B cell (primary cell): ENCODE measurements at regions of chr9 and their contacts with region 1.

Region 1: DNA sequence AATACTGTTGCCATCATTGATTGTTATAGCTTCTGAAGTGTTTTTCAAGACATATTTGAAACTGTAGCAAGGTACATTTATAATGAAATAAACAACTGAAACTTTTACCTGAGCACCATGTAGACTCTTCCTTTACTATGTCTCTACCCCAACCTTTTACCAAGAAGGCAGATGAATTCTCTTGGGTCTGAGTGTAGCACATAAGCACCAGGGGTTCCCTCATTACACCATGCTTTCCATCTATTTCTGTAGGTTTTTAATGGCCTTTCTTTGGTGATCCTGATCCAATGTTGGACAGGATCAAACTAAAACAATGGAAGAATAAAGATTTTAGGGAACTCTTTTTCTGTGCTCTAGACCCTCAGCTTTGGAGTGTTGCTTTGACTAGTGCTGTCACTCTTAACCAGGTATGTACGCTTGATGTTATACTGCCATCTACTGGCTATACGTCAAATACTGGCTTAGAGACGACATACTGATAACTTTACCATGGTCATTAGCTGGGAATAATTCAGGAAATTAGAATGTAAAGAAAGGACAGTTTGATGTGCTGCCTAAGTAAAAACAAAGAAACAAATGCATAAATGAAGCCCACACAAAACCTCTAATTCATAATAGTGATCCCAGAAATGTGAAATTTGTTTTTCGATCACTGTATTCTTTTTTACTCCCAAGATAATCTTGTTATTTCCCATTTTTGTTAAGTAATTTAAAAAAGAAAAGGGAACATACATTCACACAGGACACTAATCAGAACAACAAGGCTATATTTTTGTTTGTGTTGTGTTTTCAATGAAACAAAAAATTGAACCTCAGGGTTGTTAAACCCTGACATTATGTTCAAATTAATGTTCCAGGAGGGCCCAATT is 30.7 kb downstream of the IFNW1 start:
- DNase-seq: peak; percentile 74
- ATAC-seq: peak; percentile 47
- H3K4me3 ChIP-seq: no peak overlapping the region
- H3K4me3 Mint-ChIP-seq: no peak overlapping the region
- H3K27ac ChIP-seq: no peak overlapping the region
- H3K27ac Mint-ChIP-seq: no peak overlapping the region
- H3K4me1 ChIP-seq: no peaks in the 10 kb centered on the region
- H3K4me1 Mint-ChIP-seq: no peaks in the 10 kb centered on the region
- H3K27me3 ChIP-seq: no peaks in the 10 kb centered on the region
- H3K27me3 Mint-ChIP-seq: peaks cover 3% of the 10 kb centered on the region
- CTCF ChIP-seq: peak; percentile 93

Region 2: DNA sequence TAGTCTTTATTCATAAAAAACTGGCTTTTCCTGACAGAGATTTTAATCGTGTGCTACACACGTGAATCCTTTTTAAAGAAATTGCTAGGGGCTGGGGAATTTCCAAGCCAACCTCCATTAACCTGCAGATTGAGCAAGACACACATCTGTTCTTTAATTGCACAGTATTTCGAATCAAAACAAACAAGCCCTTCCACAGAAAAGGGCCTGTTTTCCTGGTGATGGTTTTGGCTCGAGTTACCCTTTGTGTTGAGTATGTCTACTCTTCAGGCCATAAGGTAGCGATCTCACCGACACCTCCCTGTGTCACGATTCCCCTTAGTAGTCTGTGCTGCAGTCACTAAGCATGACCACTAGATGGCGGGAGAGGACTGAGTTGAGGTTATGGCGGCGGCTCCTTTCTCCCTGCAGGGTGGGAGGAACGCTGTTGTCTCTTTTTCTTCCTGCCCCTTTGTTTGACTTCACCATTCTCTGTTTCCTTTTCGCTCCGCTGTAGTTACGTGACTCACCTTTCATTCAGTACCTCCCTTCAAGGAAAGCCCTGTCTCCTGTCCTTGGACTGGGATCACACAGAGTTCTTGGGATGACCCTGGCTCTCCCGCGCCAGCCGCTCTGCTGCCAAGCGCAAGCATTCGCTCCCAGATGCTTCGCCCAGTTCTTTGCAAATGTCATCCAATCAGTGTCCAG is 1185.0 kb before region 1 on chr9:
- CTCF ChIA-PET with region 1: interaction called, 40 read pairs
- POLR2A ChIA-PET with region 1: no interaction called
- intact Hi-C with region 1: loop called (anchors 1 kb)
- DNase-seq: peak; percentile 81
- ATAC-seq: peak; percentile 97
- H3K4me3 ChIP-seq: peak overlapping the region in 3 of 5 experiments; percentile 2 to 21 (median 4)
- H3K4me3 Mint-ChIP-seq: peak overlapping the region; percentile 20
- H3K27ac ChIP-seq: no peak overlapping the region
- H3K27ac Mint-ChIP-seq: no peak overlapping the region
- H3K4me1 ChIP-seq: peaks cover 8 to 10% of the 10 kb centered on the region in 2 donors
- H3K4me1 Mint-ChIP-seq: peaks cover 9% of the 10 kb centered on the region
- H3K27me3 ChIP-seq: peaks cover 0 to 9% (median 7%) of the 10 kb centered on the region in 4 experiments
- H3K27me3 Mint-ChIP-seq: peaks cover 20% of the 10 kb centered on the region
- CTCF ChIP-seq: peak; percentile 96

Region 3: GRCh38 chr9:20552874-20553575 is 557.9 kb before region 1 on chr9:
- CTCF ChIA-PET with region 1: interaction called, 3 read pairs
- POLR2A ChIA-PET with region 1: no interaction called
- intact Hi-C with region 1: loop called (anchors 2 kb)
- DNase-seq: peak; percentile 1
- ATAC-seq: no peak
- H3K4me3 ChIP-seq: no peak overlapping the region
- H3K4me3 Mint-ChIP-seq: no peak overlapping the region
- H3K27ac ChIP-seq: no peak overlapping the region
- H3K27ac Mint-ChIP-seq: no peak overlapping the region
- H3K4me1 ChIP-seq: peaks cover 0 to 7% of the 10 kb centered on the region in 2 donors
- H3K4me1 Mint-ChIP-seq: peaks cover 10% of the 10 kb centered on the region
- H3K27me3 ChIP-seq: no peaks in the 10 kb centered on the region
- H3K27me3 Mint-ChIP-seq: no peaks in the 10 kb centered on the region
- CTCF ChIP-seq: no peak

Region 4: DNA sequence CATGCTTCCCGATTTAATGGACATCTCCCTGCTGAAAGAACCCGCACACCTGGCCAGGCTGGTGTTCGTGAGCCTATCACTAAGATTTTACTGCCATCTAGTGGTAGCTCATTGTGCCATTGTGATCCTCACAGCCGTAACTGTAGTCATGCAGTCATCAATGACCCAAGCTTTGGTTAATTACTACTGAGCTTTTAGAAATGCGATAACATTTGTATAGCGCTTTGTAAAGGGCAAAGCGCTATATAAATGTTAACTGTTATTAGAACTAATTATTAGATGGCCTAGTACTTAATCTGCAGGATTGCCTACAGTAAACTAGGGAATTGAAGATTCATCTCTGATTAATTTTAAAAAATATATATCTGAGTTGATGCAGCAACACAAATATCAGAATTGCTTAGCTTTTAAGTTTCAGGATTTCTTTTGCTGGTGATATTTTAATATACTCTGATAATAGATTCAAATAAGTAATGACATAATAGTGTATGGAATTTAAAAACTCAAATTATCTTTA is 169.7 kb before region 1 on chr9:
- CTCF ChIA-PET with region 1: interaction called, 31 read pairs
- POLR2A ChIA-PET with region 1: no interaction called
- intact Hi-C with region 1: loop called (anchors 1 kb)
- DNase-seq: peak; percentile 78
- ATAC-seq: peak; percentile 77
- H3K4me3 ChIP-seq: no peak overlapping the region
- H3K4me3 Mint-ChIP-seq: no peak overlapping the region
- H3K27ac ChIP-seq: no peak overlapping the region
- H3K27ac Mint-ChIP-seq: no peak overlapping the region
- H3K4me1 ChIP-seq: no peaks in the 10 kb centered on the region
- H3K4me1 Mint-ChIP-seq: peaks cover 3% of the 10 kb centered on the region
- H3K27me3 ChIP-seq: no peaks in the 10 kb centered on the region
- H3K27me3 Mint-ChIP-seq: no peaks in the 10 kb centered on the region
- CTCF ChIP-seq: peak; percentile 88

Region 5: DNA sequence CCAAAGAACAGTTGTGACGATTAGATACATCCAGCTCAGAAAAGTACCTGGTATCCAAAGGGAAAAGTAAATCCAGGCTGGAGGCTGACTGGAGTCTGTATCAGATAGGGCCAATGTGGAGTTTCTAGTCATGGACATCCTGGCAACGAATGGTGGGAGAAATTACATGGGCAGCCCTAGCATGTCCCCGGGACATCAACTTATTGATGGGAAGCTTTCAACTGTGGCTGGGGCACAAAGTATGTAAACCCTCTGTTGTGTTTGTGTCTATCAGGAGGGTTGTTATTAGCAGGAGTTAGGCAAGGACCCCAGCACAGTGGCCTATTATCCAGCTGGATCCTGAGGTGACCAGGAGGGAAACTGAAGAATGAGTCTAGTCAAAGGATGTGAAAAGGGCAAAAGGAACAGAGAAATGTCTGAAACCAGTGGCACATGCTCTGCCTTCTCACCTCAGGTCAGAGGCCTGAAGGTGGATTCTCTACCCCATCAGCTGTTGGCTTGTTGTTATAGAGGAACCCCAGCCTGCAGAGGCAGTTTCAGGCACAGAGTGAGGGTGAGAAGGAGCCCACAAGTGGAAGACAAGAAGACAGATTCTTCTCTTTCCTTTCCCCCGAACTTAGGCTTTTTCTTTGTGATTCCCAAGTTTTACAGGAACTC is 10.8 kb after region 1 on chr9:
- CTCF ChIA-PET with region 1: interaction called, 10 read pairs
- POLR2A ChIA-PET with region 1: no interaction called
- intact Hi-C with region 1: no loop called
- DNase-seq: no peak
- ATAC-seq: no peak
- H3K4me3 ChIP-seq: no peak overlapping the region
- H3K4me3 Mint-ChIP-seq: no peak overlapping the region
- H3K27ac ChIP-seq: no peak overlapping the region
- H3K27ac Mint-ChIP-seq: no peak overlapping the region
- H3K4me1 ChIP-seq: no peaks in the 10 kb centered on the region
- H3K4me1 Mint-ChIP-seq: no peaks in the 10 kb centered on the region
- H3K27me3 ChIP-seq: peaks cover 0 to 4% (median 0%) of the 10 kb centered on the region in 4 experiments
- H3K27me3 Mint-ChIP-seq: peaks cover 21% of the 10 kb centered on the region
- CTCF ChIP-seq: no peak